ENCODE measurements at regions of chr13 and their contacts with region 1.

Region 1: DNA sequence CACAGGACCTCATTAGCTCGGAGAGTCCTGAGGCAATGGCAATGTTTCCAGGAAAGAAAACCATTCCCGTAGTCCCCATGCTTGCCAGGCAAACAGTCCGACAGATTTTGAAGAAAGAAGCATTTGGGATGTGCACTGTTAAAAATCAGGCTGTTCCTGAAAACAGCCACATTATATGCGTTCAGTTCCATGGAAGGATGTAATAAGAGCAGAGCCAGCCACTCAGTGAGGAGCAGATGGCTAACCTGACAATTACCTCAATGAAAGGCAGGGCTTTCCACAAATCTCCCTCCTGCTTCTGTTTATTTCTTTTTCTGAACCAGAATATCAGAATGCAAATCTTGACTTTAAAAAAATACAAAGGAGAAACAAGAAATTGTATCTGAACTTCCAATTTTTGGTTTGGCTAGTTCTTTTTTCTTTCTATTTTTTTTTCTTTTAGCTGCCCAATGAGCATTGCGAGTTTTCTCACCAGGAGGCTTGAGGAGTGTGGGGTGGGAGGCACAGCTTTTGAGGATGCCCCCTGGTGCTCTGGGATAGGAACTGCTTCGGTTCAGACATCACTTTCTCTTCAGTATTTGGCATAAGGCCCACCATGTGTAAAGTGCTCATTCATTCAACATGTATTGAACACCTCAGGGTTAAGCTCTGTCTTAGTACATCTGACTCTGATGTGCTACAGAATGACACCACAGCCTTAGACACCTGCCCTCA is 124.2 kb downstream of the TBC1D4 start:
- DNase-seq: peak; percentile 7 to 76 (median 64)
- ATAC-seq: peak; percentile 97
- H3K4me3 ChIP-seq: no peak overlapping the region
- H3K4me3 Mint-ChIP-seq: no peak overlapping the region
- H3K27ac ChIP-seq: no peak overlapping the region
- H3K27ac Mint-ChIP-seq: peak overlapping the region in 1 of 9 donors; percentile 59
- H3K4me1 ChIP-seq: no peaks in the 10 kb centered on the region
- H3K4me1 Mint-ChIP-seq: peaks cover 0 to 7% (median 5%) of the 10 kb centered on the region in 7 donors
- H3K27me3 ChIP-seq: no peaks in the 10 kb centered on the region
- H3K27me3 Mint-ChIP-seq: peaks cover 0 to 4% (median 0%) of the 10 kb centered on the region in 5 donors

Region 2: DNA sequence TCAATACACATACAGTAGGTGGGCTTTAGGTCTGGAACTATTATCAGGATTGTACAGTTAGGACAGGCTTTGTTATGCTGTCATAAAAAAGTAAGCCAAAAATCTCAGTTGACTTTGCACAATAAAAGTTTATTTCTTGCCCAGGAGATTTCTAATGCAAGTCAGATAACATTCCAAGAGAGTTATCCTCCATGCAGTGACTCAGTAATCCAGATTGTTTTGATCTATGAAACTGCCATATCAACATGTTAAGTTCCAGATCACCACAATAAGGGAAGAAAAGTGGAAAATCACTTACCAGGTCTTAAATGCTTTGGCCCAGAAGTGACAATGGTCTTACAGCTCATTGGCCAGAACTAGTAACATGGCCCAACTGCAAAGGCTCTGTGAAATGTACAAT is 587.4 kb before region 1 on chr13:
- CTCF ChIA-PET with region 1: no interaction called
- POLR2A ChIA-PET with region 1: no interaction called
- intact Hi-C with region 1: no loop called
- DNase-seq: no peak
- ATAC-seq: no peak
- H3K4me3 ChIP-seq: no peak overlapping the region
- H3K4me3 Mint-ChIP-seq: no peak overlapping the region
- H3K27ac ChIP-seq: no peak overlapping the region
- H3K27ac Mint-ChIP-seq: no peak overlapping the region
- H3K4me1 ChIP-seq: no peaks in the 10 kb centered on the region
- H3K4me1 Mint-ChIP-seq: no peaks in the 10 kb centered on the region
- H3K27me3 ChIP-seq: no peaks in the 10 kb centered on the region
- H3K27me3 Mint-ChIP-seq: peaks cover 0 to 21% (median 5%) of the 10 kb centered on the region in 5 donors

Region 3: DNA sequence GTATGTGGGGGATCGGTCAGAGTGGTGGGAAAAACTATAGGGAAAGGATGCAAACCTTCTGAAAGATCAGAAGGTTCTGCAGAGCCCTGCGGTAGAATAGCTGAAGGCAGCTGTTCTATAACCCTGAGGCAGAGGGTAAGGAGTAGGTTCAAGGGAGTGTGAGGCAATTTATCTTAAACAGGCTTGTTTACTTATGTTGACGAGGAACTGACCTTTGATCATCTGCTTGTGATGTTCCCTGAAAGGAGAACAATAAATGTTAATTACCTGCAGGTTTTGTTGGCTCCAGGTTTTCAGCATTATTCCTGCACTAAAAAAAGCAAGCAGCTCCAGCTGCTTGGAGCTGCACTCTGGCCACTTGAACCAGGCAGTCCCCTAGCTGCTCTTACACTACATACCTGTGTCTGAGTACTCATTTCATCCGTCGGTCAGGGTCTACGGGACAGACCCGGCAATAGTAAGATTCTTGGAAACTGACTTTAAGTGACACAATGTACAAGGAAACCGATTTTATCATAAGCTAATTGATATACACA is 77.8 kb before region 1 on chr13:
- CTCF ChIA-PET with region 1: no interaction called
- POLR2A ChIA-PET with region 1: no interaction called
- intact Hi-C with region 1: loop called in 1 of 2 experiments (anchors 5 kb)
- DNase-seq: no peak
- ATAC-seq: no peak
- H3K4me3 ChIP-seq: no peak overlapping the region
- H3K4me3 Mint-ChIP-seq: no peak overlapping the region
- H3K27ac ChIP-seq: no peak overlapping the region
- H3K27ac Mint-ChIP-seq: no peak overlapping the region
- H3K4me1 ChIP-seq: no peaks in the 10 kb centered on the region
- H3K4me1 Mint-ChIP-seq: no peaks in the 10 kb centered on the region
- H3K27me3 ChIP-seq: no peaks in the 10 kb centered on the region
- H3K27me3 Mint-ChIP-seq: no peaks in the 10 kb centered on the region

Region 4: GRCh38 chr13:75294110-75294509 is 63.6 kb before region 1 on chr13:
- CTCF ChIA-PET with region 1: no interaction called
- POLR2A ChIA-PET with region 1: no interaction called
- intact Hi-C with region 1: loop called in 1 of 2 experiments (anchors 1 kb)
- DNase-seq: no peak
- ATAC-seq: no peak
- H3K4me3 ChIP-seq: no peak overlapping the region
- H3K4me3 Mint-ChIP-seq: peak overlapping the region in 3 of 10 donors; percentile 15 to 53 (median 16)
- H3K27ac ChIP-seq: no peak overlapping the region
- H3K27ac Mint-ChIP-seq: peak overlapping the region in 6 of 9 donors; percentile 39 to 67 (median 49)
- H3K4me1 ChIP-seq: peaks cover 0 to 21% of the 10 kb centered on the region in 2 donors
- H3K4me1 Mint-ChIP-seq: peaks cover 10 to 55% (median 40%) of the 10 kb centered on the region in 7 donors
- H3K27me3 ChIP-seq: no peaks in the 10 kb centered on the region
- H3K27me3 Mint-ChIP-seq: no peaks in the 10 kb centered on the region